ENCODE measurements at regions of chr3 and their contacts with region 1.

Region 1: DNA sequence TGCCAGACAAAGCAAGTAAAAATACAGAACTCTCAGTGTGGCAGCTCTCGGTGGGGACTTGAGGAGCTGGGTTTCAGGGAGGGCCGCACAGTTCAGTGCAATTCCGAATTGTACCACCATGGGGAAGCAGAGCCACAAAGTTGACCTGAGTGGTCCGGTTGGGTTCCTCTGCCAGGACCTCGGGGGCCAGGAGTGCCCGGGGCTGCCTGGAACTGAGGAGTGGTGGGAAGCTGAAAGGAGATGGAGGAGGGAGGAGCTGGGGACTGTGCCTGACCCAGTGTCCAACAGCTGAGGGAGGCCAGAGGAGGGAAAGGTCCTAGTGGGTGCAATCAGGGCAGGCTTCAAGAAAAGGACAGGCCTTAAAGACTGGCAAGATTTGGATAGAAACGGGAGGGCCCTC is 32.2 kb upstream of the TRH start:
- H3K4me3 ChIP-seq: no peak overlapping the region
- H3K27ac ChIP-seq: no peak overlapping the region
- H3K4me1 ChIP-seq: no peaks in the 10 kb centered on the region
- CTCF ChIP-seq: peak; percentile 66; the same call in 1 of the 2 replicates

Region 2: DNA sequence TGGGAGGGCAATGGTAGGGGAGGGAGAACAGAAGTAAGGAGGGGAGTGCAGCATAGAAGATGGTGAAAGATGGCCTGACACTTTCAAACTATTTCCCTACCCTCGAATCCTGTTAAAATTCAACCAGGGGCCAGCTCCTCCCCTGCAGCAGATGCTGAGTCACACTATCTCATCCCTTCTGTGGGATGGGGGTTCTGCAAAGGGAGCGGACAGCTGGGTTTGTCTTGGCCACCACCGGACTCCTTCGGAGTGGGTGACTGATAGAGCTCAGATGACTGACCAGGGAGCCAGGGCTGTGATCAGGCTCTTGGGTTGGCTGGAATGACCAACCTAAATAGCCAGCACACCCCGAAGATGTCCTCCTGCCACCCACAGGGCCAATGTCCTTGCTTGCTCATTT is 15.2 kb before region 1 on chr3:
- CTCF ChIA-PET with region 1: interaction called, 11 read pairs
- POLR2A ChIA-PET with region 1: no interaction called
- H3K4me3 ChIP-seq: no peak overlapping the region
- H3K27ac ChIP-seq: no peak overlapping the region
- H3K4me1 ChIP-seq: no peaks in the 10 kb centered on the region
- CTCF ChIP-seq: no peak

Region 3: DNA sequence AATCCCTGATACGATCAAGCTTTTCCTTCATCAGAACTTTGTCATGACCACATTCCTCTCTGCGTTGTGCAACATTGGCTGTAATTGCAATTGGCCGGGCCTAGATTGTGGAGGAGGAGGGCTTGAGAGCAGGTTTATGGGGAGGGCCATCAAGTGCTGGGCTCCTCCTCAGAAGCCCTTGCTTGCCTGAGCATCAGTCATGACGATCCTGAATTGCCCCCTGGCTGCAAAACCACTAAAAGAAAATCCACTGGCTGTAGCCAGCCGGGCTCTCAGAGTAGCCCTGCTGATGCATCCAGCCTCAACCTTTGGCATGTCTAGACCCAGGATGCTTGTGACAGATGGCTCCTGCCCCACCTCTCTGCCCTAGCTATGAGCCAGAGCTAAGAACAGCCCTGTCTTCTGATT is 18.8 kb after region 1 on chr3:
- CTCF ChIA-PET with region 1: interaction called, 12 read pairs
- POLR2A ChIA-PET with region 1: interaction called, 3 read pairs
- H3K4me3 ChIP-seq: no peak overlapping the region
- H3K27ac ChIP-seq: no peak overlapping the region
- H3K4me1 ChIP-seq: no peaks in the 10 kb centered on the region
- CTCF ChIP-seq: no peak

Region 4: GRCh38 chr3:129992781-129993180 is 50.5 kb after region 1 on chr3:
- CTCF ChIA-PET with region 1: interaction called, 14 read pairs
- POLR2A ChIA-PET with region 1: no interaction called
- H3K4me3 ChIP-seq: no peak overlapping the region
- H3K27ac ChIP-seq: no peak overlapping the region
- H3K4me1 ChIP-seq: no peaks in the 10 kb centered on the region
- CTCF ChIP-seq: no peak

Region 5: GRCh38 chr3:130014526-130014925 is 72.2 kb after region 1 on chr3:
- CTCF ChIA-PET with region 1: no interaction called
- POLR2A ChIA-PET with region 1: no interaction called
- H3K4me3 ChIP-seq: no peak overlapping the region
- H3K27ac ChIP-seq: no peak overlapping the region
- H3K4me1 ChIP-seq: no peaks in the 10 kb centered on the region
- CTCF ChIP-seq: no peak

Region 6: DNA sequence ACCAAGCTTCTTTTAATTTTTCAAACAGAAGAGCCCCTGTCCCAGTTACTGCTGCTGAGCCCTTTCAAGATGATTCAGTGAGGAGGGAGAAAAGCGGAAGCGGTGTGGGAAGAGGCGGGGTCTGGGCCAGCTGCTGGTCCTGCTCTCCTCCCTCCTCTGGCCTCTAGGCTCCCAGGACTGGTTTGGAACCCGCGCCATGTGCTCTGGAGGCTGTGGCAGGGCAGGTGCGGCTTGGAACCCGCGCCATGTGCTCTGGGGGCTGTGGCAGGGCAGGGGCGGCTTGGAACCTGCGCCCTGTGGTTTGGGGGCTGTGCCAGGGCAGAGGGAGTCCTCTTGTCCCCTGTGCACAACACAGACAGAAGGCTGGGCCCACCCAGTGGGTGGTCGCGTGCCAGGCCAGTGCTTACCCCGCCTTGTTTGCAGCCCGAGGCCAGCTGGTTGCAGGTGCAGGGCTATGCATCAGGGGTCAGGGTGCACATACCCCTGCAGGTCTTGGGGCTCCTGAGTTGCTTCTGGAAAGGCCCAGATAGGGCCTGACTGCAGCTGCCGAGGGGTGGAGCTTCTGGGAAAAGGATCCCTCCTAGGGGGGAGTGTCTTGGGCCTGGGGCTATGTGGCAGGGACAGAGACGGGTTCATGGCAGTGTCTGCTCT is 151.6 kb after region 1 on chr3:
- CTCF ChIA-PET with region 1: interaction called, 54 read pairs
- POLR2A ChIA-PET with region 1: no interaction called
- H3K4me3 ChIP-seq: no peak overlapping the region
- H3K27ac ChIP-seq: no peak overlapping the region
- H3K4me1 ChIP-seq: no peaks in the 10 kb centered on the region
- CTCF ChIP-seq: no peak

Region 7: GRCh38 chr3:130111185-130111864 is 169.0 kb after region 1 on chr3:
- CTCF ChIA-PET with region 1: interaction called, 11 read pairs
- POLR2A ChIA-PET with region 1: interaction called, 3 read pairs
- H3K4me3 ChIP-seq: peak overlapping the region; percentile 81
- H3K27ac ChIP-seq: peak overlapping the region; percentile 58; the same call in 1 of the 2 replicates
- H3K4me1 ChIP-seq: no peaks in the 10 kb centered on the region
- CTCF ChIP-seq: no peak